AG04450 (cell line): ENCODE measurements at regions of chr6 and their contacts with region 1.

Region 1: GRCh38 chr6:10510592-10511367 is 10.4 kb upstream of the GCNT2 start:
- DNase-seq: no peak
- H3K4me3 ChIP-seq: no peak overlapping the region
- H3K27ac ChIP-seq: no peak overlapping the region
- H3K27me3 ChIP-seq: peaks cover 5% of the 10 kb centered on the region
- CTCF ChIP-seq: peak; percentile 77

Region 2: DNA sequence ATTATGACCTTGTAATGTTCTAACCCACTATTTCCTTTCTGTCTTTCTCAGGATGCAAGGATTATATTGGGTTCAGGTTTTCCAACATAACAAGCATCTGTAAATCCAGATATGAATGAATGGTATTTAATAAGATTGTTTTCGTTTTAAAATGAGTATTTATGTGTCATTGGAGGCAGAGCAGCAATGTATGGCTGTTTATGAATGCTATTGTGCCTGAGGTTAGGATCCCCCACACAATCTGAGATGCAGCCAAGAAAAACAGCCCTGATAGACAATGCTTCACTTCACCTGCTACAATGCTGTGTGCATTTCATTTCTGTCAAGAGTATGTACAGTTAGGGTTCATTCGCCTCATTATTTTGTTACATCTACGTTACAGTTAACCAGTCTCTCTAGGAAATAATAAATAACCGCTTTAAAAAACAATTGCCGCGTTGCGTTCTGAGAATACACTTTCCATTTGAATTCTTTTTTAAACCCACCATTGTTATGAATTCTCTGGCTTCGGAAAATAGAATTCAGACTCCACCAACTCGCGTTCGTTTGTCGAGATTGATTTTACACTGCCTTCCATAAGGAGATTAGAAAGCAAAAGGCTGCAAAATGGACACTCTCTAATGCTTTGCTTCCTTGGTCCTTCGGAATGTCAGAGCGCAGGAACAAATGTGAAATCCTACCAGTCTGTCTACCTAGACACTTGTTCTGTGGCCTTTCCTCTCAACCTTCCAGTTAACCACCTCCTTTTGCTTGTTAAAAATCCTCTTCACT is 115.4 kb before region 1 on chr6:
- CTCF ChIA-PET with region 1: no interaction called
- POLR2A ChIA-PET with region 1: no interaction called
- DNase-seq: no peak
- H3K4me3 ChIP-seq: no peak overlapping the region
- H3K27ac ChIP-seq: no peak overlapping the region
- H3K27me3 ChIP-seq: peaks cover 63% of the 10 kb centered on the region
- CTCF ChIP-seq: no peak

Region 3: DNA sequence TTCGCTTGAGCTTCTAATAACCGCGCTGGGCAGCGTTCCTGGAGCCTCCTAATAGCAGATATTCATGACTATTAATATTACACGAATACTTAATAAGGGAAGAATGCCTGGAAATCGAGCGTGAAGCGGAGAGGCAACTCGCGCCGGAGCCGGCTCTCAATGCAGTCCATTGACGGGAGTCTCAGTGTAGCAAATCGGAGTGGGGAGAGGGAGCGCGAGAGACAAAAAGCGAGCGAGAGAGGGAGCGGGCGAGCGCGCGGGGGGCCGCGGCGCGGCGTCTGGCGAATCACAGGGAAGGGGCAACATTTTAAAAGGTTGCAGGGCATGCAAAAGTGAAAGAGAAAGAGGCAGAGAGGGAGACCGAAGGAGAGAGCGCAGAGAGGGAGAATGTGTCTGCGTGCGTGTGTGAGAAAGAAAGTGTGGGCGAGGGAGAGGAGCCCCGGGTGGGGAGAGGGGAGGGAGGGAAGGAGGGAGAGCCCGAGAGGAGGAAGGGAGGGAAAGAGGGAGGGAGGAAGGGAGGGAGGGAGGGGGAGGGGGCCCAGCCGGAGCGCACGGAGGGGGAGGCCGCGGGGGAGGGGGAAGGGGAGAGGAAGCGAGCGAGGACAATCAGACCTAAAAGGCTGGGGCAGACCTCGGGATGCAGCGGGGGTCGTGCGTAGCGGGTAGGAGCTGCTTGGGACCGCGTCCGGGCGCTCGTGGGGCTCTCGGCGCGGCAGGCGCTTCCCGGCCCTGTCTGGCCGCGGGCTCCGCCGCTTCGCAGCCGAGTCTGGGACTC is 98.6 kb before region 1 on chr6:
- CTCF ChIA-PET with region 1: no interaction called
- POLR2A ChIA-PET with region 1: no interaction called
- DNase-seq: peak; percentile 33
- H3K4me3 ChIP-seq: peak overlapping the region; percentile 63
- H3K27ac ChIP-seq: peak overlapping the region; percentile 57
- H3K27me3 ChIP-seq: peaks cover 78% of the 10 kb centered on the region
- CTCF ChIP-seq: no peak

Region 4: DNA sequence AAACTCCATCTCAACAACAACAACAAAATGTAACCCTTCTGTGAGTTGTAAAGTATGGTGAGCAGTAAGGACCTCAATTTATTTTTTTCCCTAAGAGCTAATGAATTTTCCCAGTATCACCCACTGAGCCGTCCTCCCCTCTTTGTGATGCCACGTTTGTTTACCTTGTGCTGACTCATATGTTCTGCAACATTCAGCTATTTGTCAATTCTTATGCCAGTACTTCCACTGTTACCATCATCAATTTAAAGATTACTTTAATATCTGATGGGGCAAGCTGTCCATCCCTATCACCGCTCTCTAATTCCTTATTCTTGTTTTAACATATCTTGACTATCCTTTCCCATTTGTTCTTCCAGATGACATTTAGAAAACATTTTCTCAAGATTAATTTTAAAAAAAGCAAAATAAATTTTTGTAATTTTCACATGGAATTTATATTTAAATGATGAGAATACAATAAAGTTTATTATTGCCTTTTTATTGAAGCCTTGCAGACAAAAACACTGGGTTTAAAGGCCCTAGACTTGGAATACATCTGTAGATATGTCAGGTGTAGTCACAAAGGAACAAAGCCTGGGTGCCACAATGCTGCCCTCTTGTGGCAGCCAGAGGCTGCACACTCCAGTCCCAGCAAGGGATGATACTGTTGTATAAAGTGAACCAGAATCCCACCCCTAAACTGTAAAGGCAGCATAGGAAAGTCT is 290.2 kb after region 1 on chr6:
- CTCF ChIA-PET with region 1: interaction called, 29 read pairs
- POLR2A ChIA-PET with region 1: no interaction called
- DNase-seq: peak; percentile 36
- H3K4me3 ChIP-seq: no peak overlapping the region
- H3K27ac ChIP-seq: no peak overlapping the region
- H3K27me3 ChIP-seq: no peaks in the 10 kb centered on the region
- CTCF ChIP-seq: peak; percentile 100

Region 5: DNA sequence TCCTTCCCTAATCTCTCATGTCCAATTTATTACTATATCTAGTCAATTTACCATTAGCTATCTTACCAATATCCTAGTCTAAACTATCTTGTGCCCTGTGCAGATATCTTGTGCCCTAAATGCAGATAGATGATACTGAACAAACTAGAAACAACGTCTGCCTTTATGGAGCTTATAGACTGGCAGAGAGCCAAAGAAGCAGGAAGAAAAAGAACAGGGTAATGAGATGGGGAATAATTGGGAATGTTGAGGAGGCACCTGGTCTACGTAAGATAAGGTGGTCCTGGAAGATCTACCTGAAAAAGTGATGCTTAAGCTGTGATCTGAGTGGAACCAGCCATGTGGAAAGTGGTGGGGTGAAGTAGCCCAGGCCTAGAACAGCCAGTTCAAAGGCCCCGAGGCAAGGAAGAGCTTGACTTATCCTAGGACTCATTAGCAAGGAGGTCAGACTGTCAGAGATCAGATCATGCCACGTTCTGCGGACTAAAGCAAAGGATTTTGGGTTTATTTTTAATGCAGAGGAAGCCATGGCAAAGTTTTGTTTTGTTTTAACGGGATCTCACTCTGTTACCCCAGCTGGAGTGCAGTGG is 381.1 kb after region 1 on chr6:
- CTCF ChIA-PET with region 1: no interaction called
- POLR2A ChIA-PET with region 1: no interaction called
- DNase-seq: no peak
- H3K4me3 ChIP-seq: no peak overlapping the region
- H3K27ac ChIP-seq: no peak overlapping the region
- H3K27me3 ChIP-seq: peaks cover 17% of the 10 kb centered on the region
- CTCF ChIP-seq: no peak